Endothelial cell of umbilical vein (primary cell): ENCODE measurements at regions of chr3 and their contacts with region 1.

Region 1: DNA sequence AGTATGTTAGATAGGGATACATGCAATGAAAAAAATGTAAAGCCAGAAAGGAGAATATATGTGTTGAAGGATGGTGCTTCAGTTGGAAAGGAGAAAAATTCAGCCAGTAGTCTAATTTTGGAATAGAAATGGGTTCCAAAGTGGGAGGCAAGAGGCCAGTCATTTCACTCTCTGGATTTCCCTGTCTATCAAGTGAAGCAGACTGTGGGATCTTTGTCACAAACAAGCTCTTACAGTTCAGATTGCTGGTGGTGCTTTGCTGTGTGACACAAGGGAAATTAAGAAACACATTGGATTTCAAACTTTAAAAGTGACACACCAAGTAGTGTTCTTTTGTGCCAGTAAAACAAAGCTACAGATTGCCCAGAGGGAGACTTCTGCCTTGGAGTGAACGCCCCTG is 82.0 kb upstream of the BFSP2 start:
- DNase-seq: no peak
- H3K4me3 ChIP-seq: no peak overlapping the region
- H3K27ac ChIP-seq: no peak overlapping the region
- H3K4me1 ChIP-seq: peaks cover 7% of the 10 kb centered on the region
- H3K27me3 ChIP-seq: peaks cover 17 to 21% of the 10 kb centered on the region in 2 experiments
- CTCF ChIP-seq: no peak
- POLR2A ChIP-seq: no peak

Region 2: DNA sequence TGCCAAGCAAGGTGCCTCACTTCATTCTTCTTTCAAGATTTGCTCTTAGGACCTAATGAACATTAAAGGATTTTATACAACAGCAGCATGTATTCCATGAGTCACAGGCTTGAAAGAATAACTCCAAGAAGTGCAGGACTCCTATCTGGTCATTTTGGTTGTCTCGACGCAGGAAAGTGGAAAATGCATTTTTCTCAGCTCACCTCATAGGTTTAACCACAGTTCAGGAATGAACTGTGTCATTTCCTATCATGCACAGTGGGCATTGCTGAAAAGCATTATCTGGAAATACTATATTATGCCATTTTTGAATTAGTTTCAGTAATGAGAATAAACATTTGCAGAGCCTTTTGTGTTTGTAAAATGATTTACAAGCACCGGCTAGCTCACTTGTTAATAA is 16.7 kb before region 1 on chr3:
- CTCF ChIA-PET with region 1: interaction called, 7 read pairs
- POLR2A ChIA-PET with region 1: no interaction called
- dilution Hi-C with region 1: no loop called
- intact Hi-C with region 1: loop called (anchors 1 kb)
- DNase-seq: peak; percentile 76
- H3K4me3 ChIP-seq: peak overlapping the region in 2 of 3 experiments; percentile 3 to 30
- H3K27ac ChIP-seq: peak overlapping the region; percentile 14
- H3K4me1 ChIP-seq: peaks cover 38% of the 10 kb centered on the region
- H3K27me3 ChIP-seq: no peaks in the 10 kb centered on the region
- CTCF ChIP-seq: no peak
- POLR2A ChIP-seq: no peak

Region 3: GRCh38 chr3:133330065-133330464 is 12.2 kb after region 1 on chr3:
- CTCF ChIA-PET with region 1: no interaction called
- POLR2A ChIA-PET with region 1: no interaction called
- dilution Hi-C with region 1: no loop called
- intact Hi-C with region 1: no loop called
- DNase-seq: no peak
- H3K4me3 ChIP-seq: no peak overlapping the region
- H3K27ac ChIP-seq: no peak overlapping the region
- H3K4me1 ChIP-seq: no peaks in the 10 kb centered on the region
- H3K27me3 ChIP-seq: peaks cover 3 to 8% of the 10 kb centered on the region in 2 experiments
- CTCF ChIP-seq: no peak
- POLR2A ChIP-seq: no peak